ENCODE measurements at regions of chr20 and their contacts with region 1.

Region 1: DNA sequence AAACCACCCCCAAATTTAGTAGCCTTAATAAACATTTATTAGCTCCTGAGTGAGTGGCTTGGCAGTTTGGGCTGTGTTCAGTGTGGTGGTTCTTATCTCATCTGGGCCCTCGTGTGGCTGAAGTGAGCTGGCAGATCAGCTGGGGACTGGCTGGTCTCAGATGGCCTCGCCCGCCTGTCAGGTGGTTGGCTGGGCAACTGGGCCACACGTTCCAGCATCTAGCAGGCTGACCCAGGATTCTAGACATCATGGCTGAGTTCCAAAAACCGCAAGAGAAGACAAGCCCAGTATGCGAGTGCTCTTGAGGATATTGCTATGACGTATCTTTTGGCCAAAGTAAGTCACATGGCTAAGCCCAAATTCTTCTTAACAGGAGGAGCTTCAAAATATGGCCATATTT is 28.9 kb downstream of the EIF2S2 start:
- DNase-seq: peak; percentile 98
- H3K4me3 ChIP-seq: no peak overlapping the region
- H3K27ac ChIP-seq: peak overlapping the region; percentile 11
- H3K4me1 ChIP-seq: peaks cover 19% of the 10 kb centered on the region
- H3K27me3 ChIP-seq: no peaks in the 10 kb centered on the region
- CTCF ChIP-seq: peak; percentile 15 to 28

Region 2: GRCh38 chr20:33925867-33926266 is 157.3 kb before region 1 on chr20:
- CTCF ChIA-PET with region 1: no interaction called
- dilution Hi-C with region 1: no loop called
- in situ Hi-C with region 1: loop called in 1 of 2 experiments (anchors 5 kb)
- intact Hi-C with region 1: no loop called
- DNase-seq: no peak
- H3K4me3 ChIP-seq: no peak overlapping the region
- H3K27ac ChIP-seq: no peak overlapping the region
- H3K4me1 ChIP-seq: peaks cover 4% of the 10 kb centered on the region
- H3K27me3 ChIP-seq: no peaks in the 10 kb centered on the region
- CTCF ChIP-seq: no peak

Region 3: DNA sequence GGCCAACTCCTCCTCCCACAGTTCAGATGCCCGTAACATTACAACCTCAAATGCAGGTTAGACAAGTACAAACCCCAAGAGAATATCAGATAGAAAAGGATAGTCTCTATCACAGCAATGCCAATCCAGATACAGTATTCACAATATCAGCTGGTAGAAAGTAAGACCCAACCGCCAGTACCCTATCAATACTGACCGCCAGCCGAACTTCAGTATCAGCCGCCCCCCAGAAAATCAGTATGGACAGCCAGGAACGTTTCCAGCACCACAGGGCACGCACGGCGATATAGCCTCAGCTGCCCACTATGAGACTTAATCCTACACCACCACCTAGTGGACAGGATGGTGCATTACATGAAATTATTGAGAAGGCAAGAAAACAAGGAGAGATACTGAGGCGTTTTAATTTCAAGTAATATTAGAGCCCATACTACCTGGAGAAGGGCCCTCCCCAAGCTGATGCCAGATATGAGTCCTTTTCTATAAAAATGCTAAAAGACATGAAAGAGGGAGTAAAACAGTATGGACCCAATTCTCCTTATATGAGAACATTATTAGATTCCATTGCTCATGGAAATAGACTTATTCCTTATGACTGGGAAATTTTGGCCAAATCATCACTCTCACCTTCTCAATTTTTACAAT is 46.5 kb after region 1 on chr20:
- CTCF ChIA-PET with region 1: no interaction called
- dilution Hi-C with region 1: no loop called
- in situ Hi-C with region 1: no loop called
- intact Hi-C with region 1: no loop called
- DNase-seq: peak; percentile 64
- H3K4me3 ChIP-seq: no peak overlapping the region
- H3K27ac ChIP-seq: no peak overlapping the region
- H3K4me1 ChIP-seq: peaks cover under 1% of the 10 kb centered on the region
- H3K27me3 ChIP-seq: no peaks in the 10 kb centered on the region
- CTCF ChIP-seq: peak; percentile 83 to 85

Region 4: DNA sequence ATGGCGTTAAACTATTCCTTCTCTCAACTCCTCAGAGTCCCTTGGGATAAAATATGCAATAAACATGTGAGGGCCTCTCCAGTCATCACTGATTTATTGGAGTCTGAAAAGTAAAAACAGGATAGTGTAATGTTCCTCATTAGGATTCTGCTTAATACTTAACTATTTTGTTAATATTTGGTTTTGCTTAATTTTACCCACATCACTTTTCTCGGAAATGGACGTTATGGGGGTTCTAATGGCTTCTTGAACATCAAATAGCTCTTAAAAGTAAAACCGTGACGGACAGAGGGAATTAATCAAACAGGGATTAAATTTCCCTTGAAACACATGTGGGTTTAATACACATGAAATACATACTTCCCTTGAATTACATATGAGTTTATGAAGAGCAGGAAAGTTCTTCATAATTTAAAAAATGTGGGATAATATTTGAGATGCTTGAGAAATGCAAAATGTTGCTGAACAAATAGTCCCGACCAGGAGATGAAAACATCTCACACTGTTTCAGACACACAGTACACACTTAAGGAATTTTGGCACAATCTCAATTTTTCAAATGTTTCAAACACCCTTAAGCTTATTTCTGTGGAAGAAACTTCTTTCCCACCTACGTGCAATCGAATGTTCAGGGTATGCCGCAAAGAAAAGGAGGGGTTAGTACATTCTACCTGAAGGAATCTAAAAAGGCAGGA is 67.3 kb after region 1 on chr20:
- CTCF ChIA-PET with region 1: no interaction called
- dilution Hi-C with region 1: no loop called
- in situ Hi-C with region 1: no loop called
- intact Hi-C with region 1: no loop called
- DNase-seq: no peak
- H3K4me3 ChIP-seq: no peak overlapping the region
- H3K27ac ChIP-seq: no peak overlapping the region
- H3K4me1 ChIP-seq: no peaks in the 10 kb centered on the region
- H3K27me3 ChIP-seq: peaks cover 2% of the 10 kb centered on the region
- CTCF ChIP-seq: no peak

Measured in mammary epithelial cell (primary cell).